Activated CD4-positive, alpha-beta T cell treated with anti-CD3 and anti-CD28 coated beads for 36 hours (primary cell): ENCODE measurements at regions of chr1 and their contacts with region 1.

Region 1: DNA sequence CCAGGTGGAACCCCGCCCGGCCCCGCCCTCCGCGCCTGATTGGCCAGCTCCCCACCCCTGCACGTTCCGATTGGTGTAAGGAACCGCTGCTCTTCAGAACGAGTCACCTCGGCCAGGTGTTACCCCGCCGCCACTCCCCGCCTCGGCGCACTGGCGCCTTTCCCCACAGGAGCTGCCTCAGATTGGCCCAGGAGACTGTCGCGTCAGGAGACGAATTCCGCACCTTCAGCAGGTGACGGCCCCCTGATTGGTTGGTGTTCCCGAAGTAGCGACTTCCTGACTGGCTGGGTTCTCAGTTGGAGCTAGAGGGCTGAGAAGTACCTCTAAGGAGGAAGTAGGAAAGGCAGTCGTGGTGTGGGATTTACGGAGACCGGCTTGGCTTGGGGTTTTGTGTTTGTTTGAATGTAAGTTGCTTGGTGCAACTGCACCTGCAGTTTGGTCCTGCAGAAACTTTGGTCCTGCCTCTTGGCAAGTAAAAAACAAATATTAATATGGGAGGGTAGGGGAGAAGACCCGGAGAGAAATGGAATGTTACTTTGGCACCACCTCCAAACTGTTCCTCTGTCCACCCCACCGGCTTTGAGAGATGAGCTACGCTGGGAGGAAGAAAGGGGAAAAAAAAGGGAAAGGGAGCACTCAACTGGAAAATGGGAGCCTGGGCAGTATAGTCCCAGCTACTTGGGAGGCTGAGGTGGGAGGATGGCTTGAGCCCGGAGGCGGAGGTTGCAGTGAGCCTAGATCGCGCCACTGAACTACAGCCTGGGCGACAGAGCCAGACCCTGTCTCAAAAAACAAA is 411 bp upstream of the F11R start:
- DNase-seq: peak; percentile 94
- ATAC-seq: peak; percentile 92
- H3K4me3 Mint-ChIP-seq: peak overlapping the region; percentile 87
- H3K27ac Mint-ChIP-seq: peak overlapping the region; percentile 86
- H3K4me1 Mint-ChIP-seq: peaks cover 33% of the 10 kb centered on the region
- H3K27me3 Mint-ChIP-seq: no peaks in the 10 kb centered on the region

Region 2: GRCh38 chr1:160284782-160285344 is 736.5 kb before region 1 on chr1 and contains the start of gene PEX19:
- CTCF ChIA-PET with region 1: no interaction called
- POLR2A ChIA-PET with region 1: no interaction called
- intact Hi-C with region 1: no loop called
- DNase-seq: peak; percentile 97
- ATAC-seq: peak; percentile 99
- H3K4me3 Mint-ChIP-seq: peak within 1 kb of the TSS; percentile 86
- H3K27ac Mint-ChIP-seq: peak within 1 kb of the TSS; percentile 94
- H3K4me1 Mint-ChIP-seq: peaks cover 18% of the 10 kb centered on the region
- H3K27me3 Mint-ChIP-seq: no peaks in the 10 kb centered on the region
- total RNA-seq, gene PEX19: 49.2 to 55.8 TPM

Region 3: DNA sequence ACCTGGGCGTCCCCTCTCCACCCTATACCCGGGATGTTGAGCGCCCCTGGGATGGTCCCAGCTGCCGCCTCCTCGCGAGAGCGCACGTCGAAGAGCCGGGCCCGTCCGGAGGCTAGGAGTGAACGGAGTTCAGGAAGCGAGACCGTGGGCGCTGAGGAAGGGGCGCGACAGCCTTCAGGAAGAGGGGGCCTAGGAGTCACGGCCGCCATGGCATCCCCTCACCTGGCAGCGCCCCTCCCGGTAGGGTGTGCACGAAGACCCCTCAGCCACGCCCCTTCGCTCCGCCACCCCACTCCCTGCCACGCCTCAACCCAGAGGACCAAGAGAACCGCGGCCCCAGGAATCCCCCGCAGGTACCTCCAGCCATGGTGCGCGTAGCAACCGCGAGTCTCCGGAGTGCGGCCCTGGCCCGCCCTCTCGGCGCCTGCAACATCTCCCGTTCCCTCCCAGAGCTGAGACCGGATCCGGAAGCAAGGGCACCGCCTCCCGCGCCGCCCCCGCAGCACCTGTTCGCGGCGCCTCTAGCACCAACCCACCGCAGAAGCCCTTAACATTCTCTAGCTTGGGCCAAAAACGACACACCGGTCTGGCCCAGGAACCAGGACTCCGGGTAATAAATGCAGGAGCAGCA is 17.3 kb after region 1 on chr1 and contains the start of gene TSTD1:
- CTCF ChIA-PET with region 1: interaction called, 11 read pairs
- POLR2A ChIA-PET with region 1: interaction called, 3 read pairs
- intact Hi-C with region 1: loop called (anchors 1 kb)
- DNase-seq: peak; percentile 95
- ATAC-seq: peak; percentile 90
- H3K4me3 Mint-ChIP-seq: peak within 1 kb of the TSS; percentile 86
- H3K27ac Mint-ChIP-seq: peak within 1 kb of the TSS; percentile 91
- H3K4me1 Mint-ChIP-seq: peaks cover 34% of the 10 kb centered on the region
- H3K27me3 Mint-ChIP-seq: no peaks in the 10 kb centered on the region
- total RNA-seq, gene TSTD1: 26.0 to 42.8 TPM